Activated CD4-positive, alpha-beta T cell treated with anti-CD3 and anti-CD28 coated beads, Interleukin-2, amount 10 ng/mL, durations not matched to agents 24 days and 14 days (primary cell): ENCODE measurements at regions of chr1 and their contacts with region 1.

Region 1: GRCh38 chr1:16366722-16367257 is at the start of gene SZRD1:
- DNase-seq: peak; percentile 98
- H3K4me3 Mint-ChIP-seq: peak within 1 kb of the TSS; percentile 99
- H3K27ac Mint-ChIP-seq: peak within 1 kb of the TSS; percentile 100
- H3K4me1 Mint-ChIP-seq: peaks cover 34% of the 10 kb centered on the region
- H3K27me3 Mint-ChIP-seq: no peaks in the 10 kb centered on the region
- total RNA-seq, gene SZRD1: 195 and 200 TPM in 2 replicates

Region 2: DNA sequence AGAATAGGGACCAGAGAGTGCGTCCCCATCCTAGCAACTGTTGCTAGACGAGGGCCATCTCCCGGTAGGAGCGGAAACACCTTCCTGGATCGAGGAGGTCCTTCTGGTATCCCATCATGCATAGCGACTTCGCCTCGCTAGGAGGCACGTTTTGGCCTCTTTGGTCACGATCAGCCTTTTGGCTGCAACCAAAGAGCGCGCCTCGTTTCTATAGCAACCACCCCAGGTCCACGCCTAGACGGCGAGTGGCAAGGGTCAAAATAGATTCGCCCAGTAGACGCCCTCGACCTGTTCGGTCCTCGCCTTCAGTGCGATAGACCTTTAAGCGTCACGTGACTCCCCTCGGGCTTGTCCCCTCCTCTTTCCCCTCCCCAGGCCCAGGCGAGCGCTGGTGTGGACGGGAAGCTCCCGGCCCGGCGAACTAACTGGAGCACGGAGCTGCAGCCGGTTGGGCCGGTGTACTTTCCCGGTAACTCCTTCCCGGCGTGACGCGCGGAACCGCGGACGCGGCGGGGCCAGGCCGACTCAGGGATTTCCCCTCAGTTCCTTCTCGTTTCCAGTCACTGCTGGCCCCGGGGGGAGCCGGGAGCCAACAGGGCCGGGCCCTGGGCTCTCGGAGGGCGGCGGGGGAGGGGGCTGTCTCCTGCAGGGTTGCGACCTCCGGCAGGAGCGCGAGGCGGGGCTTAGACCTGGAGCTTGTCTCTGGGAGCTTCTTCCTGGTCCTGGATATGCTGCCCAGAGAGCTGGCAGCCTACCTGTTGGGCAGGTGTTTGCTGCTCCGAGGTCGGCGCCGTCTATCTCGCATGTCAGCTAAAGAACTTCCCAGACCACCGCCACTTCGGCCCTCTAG is 840.1 kb before region 1 on chr1 and contains the start of gene DNAJC16:
- intact Hi-C with region 1: loop called (anchors 5 kb)
- DNase-seq: peak; percentile 99
- H3K4me3 Mint-ChIP-seq: peak within 1 kb of the TSS; percentile 99
- H3K27ac Mint-ChIP-seq: peak within 1 kb of the TSS; percentile 100
- H3K4me1 Mint-ChIP-seq: peaks cover 43% of the 10 kb centered on the region
- H3K27me3 Mint-ChIP-seq: no peaks in the 10 kb centered on the region
- total RNA-seq, gene DNAJC16: 15.4 and 16.3 TPM in 2 replicates

Region 3: GRCh38 chr1:16078925-16079656 is 287.7 kb before region 1 on chr1:
- intact Hi-C with region 1: loop called (anchors 10 kb)
- DNase-seq: peak; percentile 93
- H3K4me3 Mint-ChIP-seq: peak overlapping the region; percentile 75
- H3K27ac Mint-ChIP-seq: peak overlapping the region; percentile 87
- H3K4me1 Mint-ChIP-seq: peaks cover 12% of the 10 kb centered on the region
- H3K27me3 Mint-ChIP-seq: peaks cover 6% of the 10 kb centered on the region

Region 4: GRCh38 chr1:16189003-16189402 is 177.8 kb before region 1 on chr1:
- intact Hi-C with region 1: no loop called
- DNase-seq: no peak
- H3K4me3 Mint-ChIP-seq: no peak overlapping the region
- H3K27ac Mint-ChIP-seq: no peak overlapping the region
- H3K4me1 Mint-ChIP-seq: no peaks in the 10 kb centered on the region
- H3K27me3 Mint-ChIP-seq: peaks cover 7% of the 10 kb centered on the region

Region 5: GRCh38 chr1:16236511-16237342 is 130.1 kb before region 1 on chr1 and contains the start of gene CPLANE2:
- intact Hi-C with region 1: loop called (anchors 2 kb)
- DNase-seq: peak; percentile 99
- H3K4me3 Mint-ChIP-seq: peak within 1 kb of the TSS; percentile 91
- H3K27ac Mint-ChIP-seq: peak within 1 kb of the TSS; percentile 92
- H3K4me1 Mint-ChIP-seq: peaks cover 20% of the 10 kb centered on the region
- H3K27me3 Mint-ChIP-seq: no peaks in the 10 kb centered on the region
- total RNA-seq, gene CPLANE2: 4.8 and 6.1 TPM in 2 replicates

Region 6: DNA sequence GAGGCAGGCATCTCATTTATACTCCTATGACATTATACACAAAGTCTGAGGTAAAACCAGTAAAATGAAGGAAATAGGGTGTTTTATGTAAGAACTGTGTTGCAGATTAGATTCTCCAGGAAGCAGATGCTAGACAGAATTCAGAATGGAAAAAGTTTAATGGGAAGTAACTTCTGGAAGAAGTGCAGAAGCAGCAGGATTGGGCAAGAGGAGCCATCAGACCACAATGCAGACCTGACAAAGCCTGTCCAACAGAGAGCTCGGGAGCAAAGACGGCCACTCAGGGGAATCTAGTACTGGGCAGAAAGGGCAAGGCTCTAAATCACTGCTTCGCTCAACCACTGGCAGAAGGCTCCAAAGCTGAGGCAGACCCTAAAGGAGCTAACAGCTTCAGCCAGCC is 48.2 kb before region 1 on chr1:
- intact Hi-C with region 1: no loop called
- DNase-seq: no peak
- H3K4me3 Mint-ChIP-seq: no peak overlapping the region
- H3K27ac Mint-ChIP-seq: no peak overlapping the region
- H3K4me1 Mint-ChIP-seq: peaks cover 4% of the 10 kb centered on the region
- H3K27me3 Mint-ChIP-seq: no peaks in the 10 kb centered on the region

Region 7: DNA sequence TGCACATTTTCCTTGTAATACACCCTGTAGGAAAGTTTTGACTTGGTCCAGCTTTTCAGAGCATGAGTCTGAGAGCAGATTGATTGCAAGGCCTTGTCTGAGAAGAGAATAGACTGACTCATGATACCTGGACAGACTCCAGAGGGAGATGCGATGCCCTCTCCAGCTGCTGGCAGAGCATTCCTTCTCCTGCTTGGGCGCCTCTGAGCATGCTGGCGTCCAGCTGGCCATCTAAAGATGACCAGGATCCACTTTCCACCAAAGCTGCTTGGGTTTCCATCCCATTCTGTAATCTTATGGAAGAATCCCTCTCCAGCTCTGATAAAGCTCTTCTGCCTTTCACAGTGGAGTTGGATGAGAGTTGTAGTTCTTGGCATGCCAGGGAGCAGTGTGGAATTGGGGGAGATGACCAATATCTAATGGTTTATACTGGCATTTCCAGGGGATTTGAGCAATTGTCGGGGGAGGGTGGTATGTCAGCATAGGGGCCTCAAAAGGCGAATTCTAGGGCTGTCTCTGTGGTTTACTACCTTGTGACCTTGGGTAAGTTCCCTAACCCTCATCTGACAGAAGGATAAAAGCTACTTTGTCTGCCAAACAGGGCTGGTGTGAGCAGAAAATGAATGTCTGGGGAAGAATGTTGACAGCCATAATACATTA is 19.8 kb after region 1 on chr1:
- intact Hi-C with region 1: loop called (anchors 2 kb)
- DNase-seq: peak; percentile 64
- H3K4me3 Mint-ChIP-seq: peak overlapping the region; percentile 84
- H3K27ac Mint-ChIP-seq: peak overlapping the region; percentile 60
- H3K4me1 Mint-ChIP-seq: peaks cover 53% of the 10 kb centered on the region
- H3K27me3 Mint-ChIP-seq: no peaks in the 10 kb centered on the region

Region 8: DNA sequence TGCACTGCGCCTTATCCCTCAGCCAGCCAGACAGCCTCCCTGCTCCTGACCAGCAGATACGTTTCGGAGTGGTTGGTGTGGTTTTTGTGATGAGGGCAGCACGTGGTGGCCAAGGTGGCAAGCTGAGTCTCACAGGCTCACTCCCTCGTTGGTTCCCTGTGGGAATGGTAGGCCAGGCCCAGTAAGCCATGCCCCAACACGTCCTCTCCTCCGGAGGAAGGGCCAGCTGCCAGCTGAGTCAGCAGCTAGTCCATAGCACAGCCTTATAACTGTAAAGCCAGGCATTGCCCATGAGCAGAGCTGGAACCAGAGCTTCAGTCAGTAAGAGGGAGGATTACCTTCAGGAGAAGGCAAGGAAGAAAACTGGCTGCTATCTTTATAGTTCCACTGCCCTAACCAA is 29.8 kb after region 1 on chr1:
- intact Hi-C with region 1: no loop called
- DNase-seq: no peak
- H3K4me3 Mint-ChIP-seq: no peak overlapping the region
- H3K27ac Mint-ChIP-seq: peak overlapping the region; percentile 62
- H3K4me1 Mint-ChIP-seq: peaks cover 30% of the 10 kb centered on the region
- H3K27me3 Mint-ChIP-seq: no peaks in the 10 kb centered on the region

Region 9: DNA sequence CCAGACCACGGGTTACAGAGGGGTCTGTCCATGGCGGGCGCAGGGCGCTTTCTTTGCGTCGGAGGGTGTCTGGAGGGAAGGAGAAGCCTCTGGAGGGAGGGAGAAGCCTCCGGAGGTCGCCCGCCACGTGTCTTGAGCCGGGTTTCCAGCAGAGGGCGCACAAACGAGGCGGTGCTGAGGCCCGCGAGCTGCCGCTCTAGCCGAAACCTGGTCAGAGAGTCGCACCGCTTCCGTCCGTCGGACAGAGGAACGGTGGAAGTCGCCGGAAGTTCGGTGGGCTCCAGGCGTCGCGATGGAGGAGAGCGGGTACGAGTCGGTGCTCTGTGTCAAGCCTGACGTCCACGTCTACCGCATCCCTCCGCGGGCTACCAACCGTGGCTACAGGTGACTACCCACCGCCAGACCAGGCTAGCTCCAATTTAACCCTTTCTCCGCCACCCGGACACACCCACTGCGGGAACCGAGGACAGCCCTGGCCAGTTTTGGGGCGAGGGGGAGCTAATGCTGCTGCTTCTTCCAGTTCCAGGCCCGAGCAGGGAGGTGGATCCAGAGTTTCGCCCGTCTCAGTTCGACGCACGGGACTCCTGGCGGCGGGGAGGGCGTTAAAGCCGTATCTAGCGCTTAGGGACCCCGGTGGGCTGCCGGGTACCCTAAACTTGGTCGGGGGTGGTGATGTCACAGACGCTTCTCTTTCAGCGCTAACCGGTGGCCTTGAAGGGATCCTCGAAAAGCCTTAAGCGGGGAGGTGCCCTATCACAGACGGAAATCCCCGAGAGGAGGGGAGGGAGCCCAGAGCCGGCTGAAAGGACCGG is 73.9 kb after region 1 on chr1 and contains the start of gene NECAP2:
- intact Hi-C with region 1: loop called (anchors 2 kb)
- DNase-seq: peak; percentile 99
- H3K4me3 Mint-ChIP-seq: peak within 1 kb of the TSS; percentile 93
- H3K27ac Mint-ChIP-seq: peak within 1 kb of the TSS; percentile 92
- H3K4me1 Mint-ChIP-seq: peaks cover 24% of the 10 kb centered on the region
- H3K27me3 Mint-ChIP-seq: no peaks in the 10 kb centered on the region
- total RNA-seq, gene NECAP2: 74.1 and 76.8 TPM in 2 replicates

Region 10: DNA sequence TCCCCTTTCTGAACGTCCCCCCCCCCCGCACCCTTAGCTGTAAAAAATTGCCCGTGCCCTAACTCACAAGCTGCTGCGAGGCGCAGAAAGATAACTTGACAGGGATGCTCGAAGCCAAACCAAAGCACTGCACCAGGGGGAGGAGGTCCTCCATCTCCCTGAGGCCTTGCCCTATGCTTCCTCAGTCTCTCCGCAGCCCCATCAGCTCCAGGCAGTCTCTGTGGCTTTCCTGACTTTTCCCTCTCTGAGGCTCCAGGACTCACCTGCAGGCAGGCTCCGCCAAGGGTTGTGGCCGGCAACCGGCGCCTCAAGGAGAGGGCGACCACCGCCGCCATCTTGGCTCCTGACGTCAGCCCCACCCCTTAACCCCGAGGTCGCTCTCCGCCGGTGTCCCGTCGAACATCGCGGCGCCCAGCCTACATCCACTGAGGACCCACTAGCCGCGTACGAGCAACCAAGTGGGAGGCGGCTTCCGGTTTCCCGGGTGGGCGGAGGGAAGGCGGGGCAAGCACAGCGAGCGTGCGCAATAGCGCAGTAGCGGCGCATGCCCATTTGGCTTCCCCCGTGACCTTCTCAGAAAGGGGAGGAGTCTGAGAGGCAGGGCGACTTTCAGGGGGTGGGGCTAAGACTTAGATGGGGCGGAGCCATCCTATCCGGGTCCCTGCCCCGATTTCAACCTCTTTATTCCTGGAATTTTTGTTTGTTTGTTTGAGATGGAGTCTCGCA is 687.1 kb after region 1 on chr1 and contains the start of gene SDHB:
- intact Hi-C with region 1: loop called (anchors 10 kb)
- DNase-seq: peak; percentile 100
- H3K4me3 Mint-ChIP-seq: peak within 1 kb of the TSS; percentile 99
- H3K27ac Mint-ChIP-seq: peak within 1 kb of the TSS; percentile 98
- H3K4me1 Mint-ChIP-seq: peaks cover 16% of the 10 kb centered on the region
- H3K27me3 Mint-ChIP-seq: peaks cover 6% of the 10 kb centered on the region
- total RNA-seq, gene SDHB: 140 and 156 TPM in 2 replicates